ENCODE measurements at regions of chr3 and their contacts with region 1.

Region 1: GRCh38 chr3:52851348-52851747 is 16.5 kb upstream of the MUSTN1 start:
- DNase-seq: peak in 1 of 2 donors; percentile 16
- ATAC-seq: peak; percentile 88

Region 2: DNA sequence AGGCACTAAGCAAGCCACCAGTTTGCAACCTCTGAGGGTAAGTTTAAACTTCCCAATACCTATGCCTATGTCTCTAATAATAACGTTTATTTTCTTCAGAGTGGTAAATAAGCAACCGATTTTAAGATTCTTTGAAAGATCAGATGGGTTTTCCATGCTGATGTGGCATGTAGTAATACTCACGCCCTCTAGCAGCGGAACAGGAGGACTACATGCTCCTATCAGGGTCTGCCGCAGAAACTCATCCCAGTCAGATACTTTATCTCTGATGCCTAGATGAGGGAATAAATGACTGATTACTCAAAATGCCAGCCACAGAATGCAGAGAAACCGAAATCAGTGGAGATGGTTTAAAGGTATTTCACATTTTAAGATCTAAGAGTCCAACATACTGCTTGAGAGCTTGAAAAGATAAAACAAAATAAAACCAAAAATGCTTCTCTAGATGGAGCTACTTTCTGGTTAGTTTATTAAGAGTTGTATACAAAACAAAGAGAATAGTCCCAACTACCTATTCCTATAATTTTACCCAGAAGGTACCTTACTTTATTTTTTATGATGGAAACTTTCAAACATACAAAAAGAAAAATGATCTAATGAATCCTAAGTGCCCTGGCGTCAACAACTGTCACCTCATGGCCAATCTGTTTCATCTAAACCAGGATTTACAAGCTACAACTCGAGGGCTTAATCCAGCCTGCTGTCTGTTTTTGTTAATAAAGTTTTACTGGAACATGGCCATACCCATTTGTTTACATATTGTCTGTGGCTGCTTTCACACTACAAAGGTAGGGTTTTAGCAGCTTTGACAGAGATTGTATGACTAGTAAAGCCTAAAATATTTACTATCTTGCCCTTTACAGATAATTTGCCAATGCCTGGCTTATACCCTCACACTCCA is 83.5 kb after region 1 on chr3:
- intact Hi-C with region 1: loop called in 1 of 2 experiments (anchors 10 kb)
- DNase-seq: peak; percentile 30 to 38
- ATAC-seq: peak; percentile 86

Measured in left colon (tissue), 2 donors.